Spleen (tissue), 13 donors: ENCODE measurements at regions of chr1 and their contacts with region 1.

Region 1: DNA sequence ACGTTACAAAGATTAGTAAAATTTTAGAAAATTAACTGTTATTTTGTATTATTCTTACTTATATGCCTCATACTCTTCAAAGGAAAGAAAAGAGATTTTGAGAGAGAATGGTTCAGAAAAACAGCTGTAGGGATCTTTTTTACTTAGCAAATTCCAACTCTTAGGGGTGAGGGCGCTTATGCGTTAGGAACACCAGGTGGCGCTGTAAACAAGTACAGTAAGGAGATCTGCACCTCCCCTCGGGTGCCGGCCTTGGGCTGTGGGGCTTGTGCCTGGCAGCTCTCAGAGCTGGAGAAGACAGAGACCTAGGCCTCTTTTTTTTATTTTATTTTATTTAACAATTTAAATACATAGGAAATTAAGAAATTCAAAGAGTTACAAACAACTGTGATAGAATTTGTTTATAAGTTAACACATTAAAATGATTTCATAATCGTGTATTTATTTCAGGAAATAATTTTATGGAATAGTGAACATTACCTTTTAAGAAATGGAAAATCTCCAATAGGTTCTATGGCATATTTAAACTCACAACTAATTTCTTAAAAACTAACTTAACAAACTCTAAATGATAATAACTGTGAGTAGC is 32.6 kb downstream of the UTP25 start:
- DNase-seq: peak; percentile 85
- H3K4me3 ChIP-seq: no peak overlapping the region
- H3K27ac ChIP-seq: no peak overlapping the region
- H3K4me1 ChIP-seq: peaks cover 0 to 2% (median 0%) of the 10 kb centered on the region in 6 donors
- H3K27me3 ChIP-seq: peaks cover 0 to 18% (median 3%) of the 10 kb centered on the region in 7 donors
- CTCF ChIP-seq: peak; percentile 33 to 93 (median 77)
- POLR2A ChIP-seq: no peak

Region 2: GRCh38 chr1:209733409-209734192 is 126.8 kb before region 1 on chr1:
- intact Hi-C with region 1: no loop called
- DNase-seq: no peak
- H3K4me3 ChIP-seq: no peak overlapping the region
- H3K27ac ChIP-seq: peak overlapping the region in 4 of 8 donors; percentile 5 to 32 (median 17)
- H3K4me1 ChIP-seq: peaks cover 0 to 14% (median 6%) of the 10 kb centered on the region in 6 donors
- H3K27me3 ChIP-seq: no peaks in the 10 kb centered on the region
- CTCF ChIP-seq: no peak
- POLR2A ChIP-seq: no peak

Region 3: GRCh38 chr1:209989525-209989924 is 129.1 kb after region 1 on chr1:
- intact Hi-C with region 1: loop called (anchors 10 kb)
- DNase-seq: no peak
- H3K4me3 ChIP-seq: no peak overlapping the region
- H3K27ac ChIP-seq: no peak overlapping the region
- H3K4me1 ChIP-seq: no peaks in the 10 kb centered on the region
- H3K27me3 ChIP-seq: peaks cover 0 to 26% (median 0%) of the 10 kb centered on the region in 7 donors
- CTCF ChIP-seq: peak in 1 of 11 experiments; percentile 18
- POLR2A ChIP-seq: no peak

Region 4: DNA sequence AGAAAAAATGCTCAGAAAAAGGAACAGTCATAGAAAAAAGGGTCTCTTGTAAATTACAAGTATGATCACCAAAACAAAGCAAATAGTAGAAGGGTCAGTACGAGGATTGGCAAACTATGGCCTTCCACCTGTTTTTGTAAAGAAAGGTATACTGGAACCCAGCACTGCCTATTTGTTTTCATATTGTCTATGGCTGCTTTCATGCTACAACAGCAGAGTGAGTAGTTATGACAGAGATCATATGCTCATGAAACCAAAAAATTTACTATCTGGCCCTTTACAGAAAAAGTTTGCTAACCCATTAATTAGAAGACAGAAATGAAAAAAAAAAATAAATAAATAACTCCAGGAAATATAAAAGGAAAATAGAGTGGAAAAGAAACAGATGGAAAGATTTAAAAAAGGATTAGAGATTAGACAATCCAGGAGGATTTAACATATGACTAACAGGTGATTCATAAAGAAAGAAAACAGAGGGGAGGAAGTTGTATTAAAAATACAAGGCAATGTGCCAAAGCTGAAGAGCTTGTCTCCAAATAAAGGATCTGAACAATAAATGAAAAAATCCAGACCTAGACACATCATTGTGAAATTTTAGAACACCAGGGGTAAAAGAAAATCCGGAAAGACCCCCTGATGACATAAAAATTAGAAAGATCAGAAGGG is 263.7 kb after region 1 on chr1:
- intact Hi-C with region 1: no loop called
- DNase-seq: no peak
- H3K4me3 ChIP-seq: no peak overlapping the region
- H3K27ac ChIP-seq: no peak overlapping the region
- H3K4me1 ChIP-seq: no peaks in the 10 kb centered on the region
- H3K27me3 ChIP-seq: no peaks in the 10 kb centered on the region
- CTCF ChIP-seq: no peak
- POLR2A ChIP-seq: no peak

Region 5: DNA sequence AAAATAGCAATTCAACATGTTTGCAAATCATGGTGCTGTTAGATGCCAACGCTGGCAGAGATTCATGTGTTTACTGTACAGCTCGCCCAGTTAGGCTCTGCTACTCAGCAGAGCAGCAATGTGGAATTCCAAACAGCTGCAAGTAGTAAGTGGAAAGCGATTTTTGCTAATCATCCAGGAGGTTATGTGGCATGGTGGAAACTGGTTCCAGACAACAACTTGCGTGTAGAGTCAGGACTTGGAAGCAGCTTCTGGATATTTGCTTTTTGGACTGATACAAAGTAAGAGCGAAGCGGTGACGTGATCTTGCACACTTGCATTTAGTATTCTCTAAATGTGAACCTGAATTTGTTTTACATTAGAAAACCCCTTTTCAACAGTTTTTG is 441.2 kb after region 1 on chr1:
- intact Hi-C with region 1: loop called (anchors 5 kb)
- DNase-seq: no peak
- H3K4me3 ChIP-seq: no peak overlapping the region
- H3K27ac ChIP-seq: no peak overlapping the region
- H3K4me1 ChIP-seq: no peaks in the 10 kb centered on the region
- H3K27me3 ChIP-seq: peaks cover 0 to 16% (median 0%) of the 10 kb centered on the region in 7 donors
- CTCF ChIP-seq: no peak
- POLR2A ChIP-seq: no peak